CD14-positive monocyte (primary cell): ENCODE measurements at regions of chr9 and their contacts with region 1.

Region 1: GRCh38 chr9:94656200-94656599 is 16.9 kb upstream of the FBP1 start:
- DNase-seq: peak; percentile 84 to 85 (median 85)
- H3K4me3 ChIP-seq: peak overlapping the region; percentile 13 to 65 (median 45)
- H3K4me3 Mint-ChIP-seq: peak overlapping the region; percentile 73 to 82
- H3K27ac ChIP-seq: peak overlapping the region; percentile 63 to 93
- H3K27ac Mint-ChIP-seq: peak overlapping the region; percentile 95 to 99 (median 98)
- H3K4me1 ChIP-seq: peaks cover 61 to 65% of the 10 kb centered on the region in 2 donors
- H3K4me1 Mint-ChIP-seq: peaks cover 62% of the 10 kb centered on the region
- H3K27me3 ChIP-seq: no peaks in the 10 kb centered on the region
- H3K27me3 Mint-ChIP-seq: peaks cover 0 to 3% (median 3%) of the 10 kb centered on the region in 3 donors
- CTCF ChIP-seq: no peak

Region 2: GRCh38 chr9:94639061-94639998 is 16.9 kb before region 1 on chr9 and contains the start of gene FBP1:
- intact Hi-C with region 1: loop called in 1 of 2 experiments (anchors 2 kb)
- DNase-seq: peak; percentile 87 to 91 (median 88)
- H3K4me3 ChIP-seq: peak within 1 kb of the TSS; percentile 75 to 78 (median 77)
- H3K4me3 Mint-ChIP-seq: peak within 1 kb of the TSS; percentile 99
- H3K27ac ChIP-seq: peak within 1 kb of the TSS; percentile 90
- H3K27ac Mint-ChIP-seq: peak within 1 kb of the TSS; percentile 97 to 99 (median 98)
- H3K4me1 ChIP-seq: peaks cover 55 to 68% of the 10 kb centered on the region in 2 donors
- H3K4me1 Mint-ChIP-seq: peaks cover 69% of the 10 kb centered on the region
- H3K27me3 ChIP-seq: no peaks in the 10 kb centered on the region
- H3K27me3 Mint-ChIP-seq: peaks cover 0 to 8% (median 2%) of the 10 kb centered on the region in 3 donors
- CTCF ChIP-seq: no peak
- polyA plus RNA-seq, gene FBP1: 82.2 to 95.5 (median 84.4) TPM

Region 3: GRCh38 chr9:94726495-94727191 is 70.4 kb after region 1 on chr9 and contains the start of gene AOPEP:
- intact Hi-C with region 1: loop called in 1 of 2 experiments (anchors 10 kb)
- DNase-seq: peak; percentile 97 to 98 (median 98)
- H3K4me3 ChIP-seq: peak within 1 kb of the TSS; percentile 77 to 96 (median 93)
- H3K4me3 Mint-ChIP-seq: peak within 1 kb of the TSS; percentile 96
- H3K27ac ChIP-seq: peak within 1 kb of the TSS; percentile 85 to 87
- H3K27ac Mint-ChIP-seq: peak within 1 kb of the TSS; percentile 92 to 98 (median 97)
- H3K4me1 ChIP-seq: peaks cover 12 to 15% of the 10 kb centered on the region in 2 donors
- H3K4me1 Mint-ChIP-seq: peaks cover 13% of the 10 kb centered on the region
- H3K27me3 ChIP-seq: no peaks in the 10 kb centered on the region
- H3K27me3 Mint-ChIP-seq: peaks cover 0 to 8% (median 4%) of the 10 kb centered on the region in 3 donors
- CTCF ChIP-seq: no peak
- polyA plus RNA-seq, gene AOPEP: 3.0 to 4.1 (median 3.1) TPM

Region 4: GRCh38 chr9:96139592-96140295 is 1483.5 kb after region 1 on chr9:
- intact Hi-C with region 1: loop called in 1 of 2 experiments (anchors 10 kb)
- DNase-seq: peak; percentile 60 to 74 (median 63)
- H3K4me3 ChIP-seq: no peak overlapping the region
- H3K4me3 Mint-ChIP-seq: peak overlapping the region; percentile 42 to 45
- H3K27ac ChIP-seq: peak overlapping the region; percentile 71 to 73
- H3K27ac Mint-ChIP-seq: peak overlapping the region; percentile 70 to 93 (median 88)
- H3K4me1 ChIP-seq: peaks cover 64 to 88% of the 10 kb centered on the region in 2 donors
- H3K4me1 Mint-ChIP-seq: peaks cover 74% of the 10 kb centered on the region
- H3K27me3 ChIP-seq: no peaks in the 10 kb centered on the region
- H3K27me3 Mint-ChIP-seq: no peaks in the 10 kb centered on the region
- CTCF ChIP-seq: no peak